IMR-90 (cell line): ENCODE measurements at regions of chr3 and their contacts with region 1.

Region 1: GRCh38 chr3:194592798-194593752 is 40.1 kb downstream of the TMEM44 start:
- DNase-seq: peak; percentile 100
- ATAC-seq: peak; percentile 86
- H3K4me3 ChIP-seq: no peak overlapping the region
- H3K27ac ChIP-seq: peak overlapping the region; percentile 76
- H3K4me1 ChIP-seq: peaks cover 11% of the 10 kb centered on the region
- H3K27me3 ChIP-seq: no peaks in the 10 kb centered on the region
- CTCF ChIP-seq: no peak
- POLR2A ChIP-seq: no peak
- RAD21 ChIP-seq: peak; percentile 30

Region 2: GRCh38 chr3:194333212-194333980 is 259.7 kb before region 1 on chr3:
- CTCF ChIA-PET with region 1: no interaction called
- POLR2A ChIA-PET with region 1: no interaction called
- dilution Hi-C with region 1: no loop called
- in situ Hi-C with region 1: no loop called
- intact Hi-C with region 1: loop called (anchors 1 kb)
- DNase-seq: peak; percentile 80
- ATAC-seq: peak; percentile 90
- H3K4me3 ChIP-seq: peak overlapping the region; percentile 53
- H3K27ac ChIP-seq: no peak overlapping the region
- H3K4me1 ChIP-seq: peaks cover 12% of the 10 kb centered on the region
- H3K27me3 ChIP-seq: no peaks in the 10 kb centered on the region; the same call in 1 of the 2 replicates
- CTCF ChIP-seq: peak; percentile 97
- POLR2A ChIP-seq: 0 out of 2 replicates have a peak, but pooled peaks have one; percentile 38
- RAD21 ChIP-seq: peak; percentile 100

Region 3: GRCh38 chr3:194472290-194472920 is 120.7 kb before region 1 on chr3:
- CTCF ChIA-PET with region 1: interaction called, 32 read pairs
- POLR2A ChIA-PET with region 1: no interaction called
- dilution Hi-C with region 1: no loop called
- in situ Hi-C with region 1: no loop called
- intact Hi-C with region 1: loop called (anchors 1 kb)
- DNase-seq: peak; percentile 82
- ATAC-seq: peak; percentile 80
- H3K4me3 ChIP-seq: no peak overlapping the region
- H3K27ac ChIP-seq: no peak overlapping the region
- H3K4me1 ChIP-seq: peaks cover 26% of the 10 kb centered on the region
- H3K27me3 ChIP-seq: no peaks in the 10 kb centered on the region
- CTCF ChIP-seq: peak; percentile 97
- POLR2A ChIP-seq: 0 out of 2 replicates have a peak, but pooled peaks have one; percentile 34
- RAD21 ChIP-seq: peak; percentile 92

Region 4: GRCh38 chr3:194486540-194487288 is 106.4 kb before region 1 on chr3 and contains the start of gene ATP13A3:
- CTCF ChIA-PET with region 1: interaction called, 9 read pairs
- POLR2A ChIA-PET with region 1: no interaction called
- dilution Hi-C with region 1: no loop called
- in situ Hi-C with region 1: loop called (anchors 5 kb)
- intact Hi-C with region 1: loop called (anchors 1 kb)
- DNase-seq: peak; percentile 88
- ATAC-seq: peak; percentile 81
- H3K4me3 ChIP-seq: peak within 1 kb of the TSS; percentile 82
- H3K27ac ChIP-seq: peak within 1 kb of the TSS; percentile 93
- H3K4me1 ChIP-seq: peaks cover 21% of the 10 kb centered on the region
- H3K27me3 ChIP-seq: no peaks in the 10 kb centered on the region
- CTCF ChIP-seq: no peak
- POLR2A ChIP-seq: peak; percentile 77
- RAD21 ChIP-seq: no peak
- total RNA-seq, gene ATP13A3: 154 and 284 TPM in 2 replicates

Region 5: GRCh38 chr3:194532591-194532990 is 60.5 kb before region 1 on chr3:
- CTCF ChIA-PET with region 1: interaction called, 3 read pairs
- POLR2A ChIA-PET with region 1: no interaction called
- dilution Hi-C with region 1: no loop called
- in situ Hi-C with region 1: no loop called
- intact Hi-C with region 1: loop called (anchors 1 kb)
- DNase-seq: no peak
- ATAC-seq: no peak
- H3K4me3 ChIP-seq: no peak overlapping the region
- H3K27ac ChIP-seq: no peak overlapping the region
- H3K4me1 ChIP-seq: peaks cover 8% of the 10 kb centered on the region
- H3K27me3 ChIP-seq: no peaks in the 10 kb centered on the region
- CTCF ChIP-seq: no peak
- POLR2A ChIP-seq: no peak
- RAD21 ChIP-seq: no peak

Region 6: GRCh38 chr3:194573691-194574437 is 19.2 kb before region 1 on chr3:
- CTCF ChIA-PET with region 1: interaction called, 3 read pairs
- POLR2A ChIA-PET with region 1: no interaction called
- dilution Hi-C with region 1: no loop called
- in situ Hi-C with region 1: no loop called
- intact Hi-C with region 1: loop called (anchors 1 kb)
- DNase-seq: peak; percentile 68
- ATAC-seq: peak; percentile 27; the same call in 1 of the 2 replicates
- H3K4me3 ChIP-seq: no peak overlapping the region
- H3K27ac ChIP-seq: peak overlapping the region; percentile 25
- H3K4me1 ChIP-seq: peaks cover 32% of the 10 kb centered on the region
- H3K27me3 ChIP-seq: no peaks in the 10 kb centered on the region
- CTCF ChIP-seq: peak; percentile 47; the same call in 1 of the 2 replicates
- POLR2A ChIP-seq: peak; percentile 73
- RAD21 ChIP-seq: peak; percentile 67